CD8-positive, alpha-beta T cell (primary cell): ENCODE measurements at regions of chr11 and their contacts with region 1.

Region 1: DNA sequence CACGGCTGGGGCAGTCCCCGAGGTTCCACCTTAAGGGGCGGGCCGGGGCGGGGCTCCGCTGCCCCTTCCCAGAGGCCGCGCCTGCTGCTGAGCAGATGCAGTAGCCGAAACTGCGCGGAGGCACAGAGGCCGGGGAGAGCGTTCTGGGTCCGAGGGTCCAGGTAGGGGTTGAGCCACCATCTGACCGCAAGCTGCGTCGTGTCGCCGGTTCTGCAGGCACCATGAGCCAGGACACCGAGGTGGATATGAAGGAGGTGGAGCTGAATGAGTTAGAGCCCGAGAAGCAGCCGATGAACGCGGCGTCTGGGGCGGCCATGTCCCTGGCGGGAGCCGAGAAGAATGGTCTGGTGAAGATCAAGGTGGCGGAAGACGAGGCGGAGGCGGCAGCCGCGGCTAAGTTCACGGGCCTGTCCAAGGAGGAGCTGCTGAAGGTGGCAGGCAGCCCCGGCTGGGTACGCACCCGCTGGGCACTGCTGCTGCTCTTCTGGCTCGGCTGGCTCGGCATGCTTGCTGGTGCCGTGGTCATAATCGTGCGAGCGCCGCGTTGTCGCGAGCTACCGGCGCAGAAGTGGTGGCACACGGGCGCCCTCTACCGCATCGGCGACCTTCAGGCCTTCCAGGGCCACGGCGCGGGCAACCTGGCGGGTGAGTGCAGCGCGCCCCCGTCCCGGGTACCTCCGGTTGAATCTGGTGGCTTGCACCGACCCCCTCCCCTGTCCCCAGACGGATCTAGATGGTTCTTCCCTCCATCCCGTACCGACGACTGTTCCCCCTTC is at the start of gene SLC3A2:
- DNase-seq: peak; percentile 76 to 94 (median 85)
- ATAC-seq: peak; percentile 74
- H3K4me3 ChIP-seq: peak within 1 kb of the TSS; percentile 66 to 97
- H3K4me3 Mint-ChIP-seq: peak within 1 kb of the TSS; percentile 100
- H3K27ac ChIP-seq: peak within 1 kb of the TSS; percentile 94 to 99
- H3K27ac Mint-ChIP-seq: peak within 1 kb of the TSS; percentile 100
- H3K4me1 ChIP-seq: peaks cover 36% of the 10 kb centered on the region
- H3K4me1 Mint-ChIP-seq: peaks cover 50% of the 10 kb centered on the region
- H3K27me3 ChIP-seq: no peaks in the 10 kb centered on the region
- H3K27me3 Mint-ChIP-seq: no peaks in the 10 kb centered on the region
- CTCF ChIP-seq: peak; percentile 84
- total RNA-seq, gene SLC3A2: 212 to 245 TPM

Region 2: GRCh38 chr11:61429691-61430582 is 1451.1 kb before region 1 on chr11 and contains the starts of genes CPSF7 and SDHAF2:
- CTCF ChIA-PET with region 1: no interaction called
- POLR2A ChIA-PET with region 1: no interaction called
- intact Hi-C with region 1: loop called in 1 of 2 experiments (anchors 10 kb)
- DNase-seq: peak; percentile 93 to 99 (median 98)
- ATAC-seq: peak; percentile 80
- H3K4me3 ChIP-seq: peak within 1 kb of the TSS; percentile 70 to 95
- H3K4me3 Mint-ChIP-seq: peak within 1 kb of the TSS; percentile 97
- H3K27ac ChIP-seq: peak within 1 kb of the TSS; percentile 98 to 100
- H3K27ac Mint-ChIP-seq: peak within 1 kb of the TSS; percentile 100
- H3K4me1 ChIP-seq: peaks cover 53% of the 10 kb centered on the region
- H3K4me1 Mint-ChIP-seq: peaks cover 72% of the 10 kb centered on the region
- H3K27me3 ChIP-seq: no peaks in the 10 kb centered on the region
- H3K27me3 Mint-ChIP-seq: no peaks in the 10 kb centered on the region
- CTCF ChIP-seq: no peak
- total RNA-seq, gene CPSF7: 106 to 111 TPM
- total RNA-seq, gene SDHAF2: 31.4 to 33.0 TPM

Region 3: DNA sequence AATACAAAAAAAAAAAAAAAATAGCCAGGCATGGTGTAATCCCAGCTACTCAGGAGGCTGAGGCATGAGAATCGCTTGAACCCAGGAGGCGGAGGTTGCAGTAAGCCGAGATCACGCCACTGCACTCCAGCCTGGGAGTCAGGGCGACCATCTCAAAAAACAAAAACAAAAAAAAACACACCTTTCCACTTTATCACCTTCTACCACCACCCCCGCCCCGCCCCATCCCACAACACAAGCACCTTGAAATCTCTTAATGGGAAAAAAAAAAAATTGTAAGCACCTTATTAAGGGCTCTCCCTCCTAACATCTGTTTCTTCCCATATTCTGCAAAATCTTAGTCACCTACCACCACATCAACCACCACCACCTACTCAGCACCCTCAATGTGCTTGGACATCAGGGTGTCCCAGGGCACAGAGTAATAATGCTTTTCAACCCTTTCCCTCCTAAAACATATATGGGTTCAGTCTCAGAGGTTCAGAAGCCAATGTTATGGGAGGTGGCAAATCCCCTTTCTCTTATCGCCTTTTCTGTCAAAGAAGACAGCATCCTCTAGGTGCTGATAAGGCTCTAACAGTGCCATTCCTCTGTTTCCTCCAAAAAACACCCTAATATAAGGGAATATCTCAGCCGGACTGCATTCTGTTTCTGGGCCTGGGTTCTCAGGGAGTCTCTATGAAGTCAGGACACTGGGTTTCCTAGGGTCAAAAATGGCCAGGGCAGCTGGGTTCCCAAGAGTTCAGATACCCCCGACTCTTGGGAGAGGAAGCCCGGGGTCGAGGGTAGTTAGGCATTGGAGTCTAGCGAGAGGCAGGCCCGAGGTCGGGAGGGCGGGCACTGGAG is 228.6 kb before region 1 on chr11:
- CTCF ChIA-PET with region 1: no interaction called
- POLR2A ChIA-PET with region 1: no interaction called
- intact Hi-C with region 1: no loop called
- DNase-seq: peak in 3 of 9 experiments; percentile 26 to 50 (median 46)
- ATAC-seq: peak; percentile 10
- H3K4me3 ChIP-seq: peak overlapping the region; percentile 84 to 90
- H3K4me3 Mint-ChIP-seq: peak overlapping the region; percentile 91
- H3K27ac ChIP-seq: peak overlapping the region; percentile 81 to 91
- H3K27ac Mint-ChIP-seq: peak overlapping the region; percentile 94
- H3K4me1 ChIP-seq: peaks cover 14% of the 10 kb centered on the region
- H3K4me1 Mint-ChIP-seq: peaks cover 18% of the 10 kb centered on the region
- H3K27me3 ChIP-seq: no peaks in the 10 kb centered on the region
- H3K27me3 Mint-ChIP-seq: no peaks in the 10 kb centered on the region
- CTCF ChIP-seq: no peak

Region 4: GRCh38 chr11:62665075-62665598 is 215.9 kb before region 1 on chr11 and contains the starts of genes C11orf98 and CSKMT:
- CTCF ChIA-PET with region 1: no interaction called
- POLR2A ChIA-PET with region 1: interaction called, 13 read pairs
- intact Hi-C with region 1: loop called in 1 of 2 experiments (anchors 2 kb)
- DNase-seq: peak; percentile 92 to 98 (median 95)
- ATAC-seq: peak; percentile 87
- H3K4me3 ChIP-seq: peak within 1 kb of the TSS; percentile 95 to 97
- H3K4me3 Mint-ChIP-seq: peak within 1 kb of the TSS; percentile 96
- H3K27ac ChIP-seq: peak within 1 kb of the TSS; percentile 81 to 92
- H3K27ac Mint-ChIP-seq: peak within 1 kb of the TSS; percentile 93
- H3K4me1 ChIP-seq: peaks cover 31% of the 10 kb centered on the region
- H3K4me1 Mint-ChIP-seq: peaks cover 45% of the 10 kb centered on the region
- H3K27me3 ChIP-seq: no peaks in the 10 kb centered on the region
- H3K27me3 Mint-ChIP-seq: no peaks in the 10 kb centered on the region
- CTCF ChIP-seq: no peak
- total RNA-seq, gene C11orf98: 22.5 to 25.7 TPM
- total RNA-seq, gene CSKMT: 25.4 to 25.7 TPM

Region 5: DNA sequence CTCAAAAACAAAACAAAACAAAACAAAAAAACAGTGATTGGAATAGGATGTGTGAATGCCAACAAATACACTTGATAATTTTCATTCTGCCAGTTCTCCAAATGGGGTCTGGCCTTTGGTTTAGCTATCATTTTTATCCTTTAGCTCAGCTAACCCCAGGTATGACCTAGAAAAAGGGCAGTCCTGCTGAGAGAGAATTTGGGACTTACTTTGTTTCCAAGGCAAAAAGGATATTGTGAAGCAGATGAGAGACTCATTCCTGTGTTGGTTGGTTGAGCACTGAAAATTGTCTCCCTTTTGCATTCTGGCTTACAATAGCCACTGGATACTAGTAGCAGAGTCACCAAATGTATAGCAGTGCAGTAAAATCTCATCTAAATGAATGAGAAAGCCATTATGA is 143.8 kb before region 1 on chr11:
- CTCF ChIA-PET with region 1: no interaction called
- POLR2A ChIA-PET with region 1: no interaction called
- intact Hi-C with region 1: no loop called
- DNase-seq: no peak
- ATAC-seq: no peak
- H3K4me3 ChIP-seq: no peak overlapping the region
- H3K4me3 Mint-ChIP-seq: no peak overlapping the region
- H3K27ac ChIP-seq: no peak overlapping the region
- H3K27ac Mint-ChIP-seq: no peak overlapping the region
- H3K4me1 ChIP-seq: no peaks in the 10 kb centered on the region
- H3K4me1 Mint-ChIP-seq: peaks cover 7% of the 10 kb centered on the region
- H3K27me3 ChIP-seq: no peaks in the 10 kb centered on the region
- H3K27me3 Mint-ChIP-seq: no peaks in the 10 kb centered on the region
- CTCF ChIP-seq: no peak

Region 6: DNA sequence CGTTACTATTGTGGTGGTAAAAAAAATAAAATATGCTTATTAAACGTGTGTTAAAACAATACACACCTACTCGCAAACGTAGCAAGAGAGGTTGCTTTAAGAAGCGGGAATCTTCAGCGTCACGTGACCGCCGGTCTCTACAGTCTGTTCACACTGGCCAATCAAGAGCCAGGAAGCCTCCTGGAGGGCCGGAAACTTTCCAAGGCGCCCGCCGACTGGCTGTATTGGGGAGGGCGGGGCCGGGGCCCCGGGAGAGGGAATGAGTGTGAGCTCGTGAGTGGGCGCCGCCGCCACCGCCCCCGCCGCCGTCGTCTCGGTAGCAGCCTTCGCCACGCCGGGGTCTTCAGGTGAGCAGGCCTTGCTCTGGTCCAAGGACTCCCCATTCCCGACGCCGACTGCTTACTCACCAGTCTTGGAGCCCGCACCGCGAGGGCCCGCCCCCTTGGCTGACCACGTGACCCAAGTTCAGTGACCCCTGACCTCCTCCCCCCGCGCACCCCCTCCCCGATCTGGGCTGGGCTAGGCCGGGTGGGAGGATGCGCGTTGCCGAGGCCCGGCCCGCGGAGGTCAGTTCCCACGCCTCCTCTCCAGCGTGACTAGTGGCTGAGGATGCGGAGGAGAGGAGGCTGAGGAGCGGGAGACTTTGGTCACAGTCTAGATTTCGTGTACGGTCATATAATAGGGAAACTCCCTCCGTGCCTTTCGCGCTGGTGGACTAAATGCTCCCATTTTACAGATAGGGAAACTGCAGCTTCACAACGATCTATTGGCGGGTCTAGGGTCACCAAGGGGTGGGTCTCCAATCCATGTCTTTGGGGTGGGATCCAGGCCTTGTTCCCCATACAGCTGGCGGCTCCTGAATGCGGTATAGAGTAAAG is 109.6 kb before region 1 on chr11 and contains the start of gene TAF6L:
- CTCF ChIA-PET with region 1: interaction called, 3 read pairs
- POLR2A ChIA-PET with region 1: interaction called, 9 read pairs
- intact Hi-C with region 1: loop called (anchors 1 kb)
- DNase-seq: peak; percentile 74 to 93 (median 87)
- ATAC-seq: peak; percentile 83
- H3K4me3 ChIP-seq: peak within 1 kb of the TSS; percentile 66 to 78
- H3K4me3 Mint-ChIP-seq: peak within 1 kb of the TSS; percentile 91
- H3K27ac ChIP-seq: peak within 1 kb of the TSS; percentile 64 to 83
- H3K27ac Mint-ChIP-seq: peak within 1 kb of the TSS; percentile 94
- H3K4me1 ChIP-seq: peaks cover 22% of the 10 kb centered on the region
- H3K4me1 Mint-ChIP-seq: peaks cover 27% of the 10 kb centered on the region
- H3K27me3 ChIP-seq: no peaks in the 10 kb centered on the region
- H3K27me3 Mint-ChIP-seq: no peaks in the 10 kb centered on the region
- CTCF ChIP-seq: no peak
- total RNA-seq, gene TAF6L: 10.3 to 13.2 TPM

Region 7: GRCh38 chr11:62831520-62832335 is 49.3 kb before region 1 on chr11 and contains the start of gene STX5:
- CTCF ChIA-PET with region 1: interaction called, 3 read pairs
- POLR2A ChIA-PET with region 1: interaction called, 11 read pairs
- intact Hi-C with region 1: loop called (anchors 1 kb)
- DNase-seq: peak; percentile 99 to 100 (median 100)
- ATAC-seq: peak; percentile 97
- H3K4me3 ChIP-seq: peak within 1 kb of the TSS; percentile 88 to 95
- H3K4me3 Mint-ChIP-seq: peak within 1 kb of the TSS; percentile 96
- H3K27ac ChIP-seq: peak within 1 kb of the TSS; percentile 94 to 95
- H3K27ac Mint-ChIP-seq: peak within 1 kb of the TSS; percentile 98
- H3K4me1 ChIP-seq: peaks cover 21% of the 10 kb centered on the region
- H3K4me1 Mint-ChIP-seq: peaks cover 42% of the 10 kb centered on the region
- H3K27me3 ChIP-seq: no peaks in the 10 kb centered on the region
- H3K27me3 Mint-ChIP-seq: no peaks in the 10 kb centered on the region
- CTCF ChIP-seq: no peak
- total RNA-seq, gene STX5: 113 TPM

Region 8: GRCh38 chr11:62905927-62906531 is 25.0 kb after region 1 on chr11:
- CTCF ChIA-PET with region 1: interaction called, 10 read pairs
- POLR2A ChIA-PET with region 1: no interaction called
- intact Hi-C with region 1: no loop called
- DNase-seq: peak; percentile 61 to 88 (median 81)
- ATAC-seq: peak; percentile 77
- H3K4me3 ChIP-seq: no peak overlapping the region
- H3K4me3 Mint-ChIP-seq: no peak overlapping the region
- H3K27ac ChIP-seq: no peak overlapping the region
- H3K27ac Mint-ChIP-seq: no peak overlapping the region
- H3K4me1 ChIP-seq: no peaks in the 10 kb centered on the region
- H3K4me1 Mint-ChIP-seq: peaks cover 1% of the 10 kb centered on the region
- H3K27me3 ChIP-seq: no peaks in the 10 kb centered on the region
- H3K27me3 Mint-ChIP-seq: peaks cover 7% of the 10 kb centered on the region
- CTCF ChIP-seq: peak; percentile 96

Region 9: DNA sequence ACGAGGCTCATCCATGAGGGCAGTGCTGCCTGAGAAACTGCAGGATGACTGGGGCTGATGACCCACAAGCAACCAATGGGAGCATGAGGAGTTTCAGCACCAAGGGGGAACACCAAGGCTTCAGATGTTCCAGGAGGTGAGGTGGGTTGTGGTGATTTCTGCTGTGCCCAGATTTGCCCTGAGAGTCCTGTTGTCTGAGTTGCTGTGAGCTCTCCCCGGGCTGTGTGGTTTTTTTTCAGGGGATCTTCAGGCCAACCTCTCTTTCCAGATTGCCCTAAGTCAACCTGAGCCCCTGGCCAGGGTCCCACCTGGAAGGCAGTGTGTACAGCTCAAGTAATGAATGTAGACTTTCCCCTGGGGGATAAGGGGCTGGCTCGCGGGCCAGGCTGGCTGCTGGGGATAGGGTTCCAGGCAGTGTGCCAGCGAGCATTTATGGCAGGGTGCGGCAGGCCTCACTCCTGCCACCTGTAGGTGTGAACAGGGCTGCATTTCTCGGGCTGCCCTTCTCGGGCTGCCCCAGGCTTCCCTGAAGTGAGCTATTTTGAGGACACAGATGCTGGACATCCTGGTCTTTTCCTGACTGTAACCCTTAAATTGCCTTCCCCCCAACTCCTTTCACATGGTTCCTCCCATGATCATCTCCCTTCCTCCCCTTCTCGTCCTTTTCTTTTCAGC is 94.0 kb after region 1 on chr11:
- CTCF ChIA-PET with region 1: no interaction called
- POLR2A ChIA-PET with region 1: no interaction called
- intact Hi-C with region 1: no loop called
- DNase-seq: peak in 3 of 9 experiments; percentile 8 to 31 (median 16)
- ATAC-seq: no peak
- H3K4me3 ChIP-seq: no peak overlapping the region
- H3K4me3 Mint-ChIP-seq: no peak overlapping the region
- H3K27ac ChIP-seq: no peak overlapping the region
- H3K27ac Mint-ChIP-seq: no peak overlapping the region
- H3K4me1 ChIP-seq: no peaks in the 10 kb centered on the region
- H3K4me1 Mint-ChIP-seq: no peaks in the 10 kb centered on the region
- H3K27me3 ChIP-seq: no peaks in the 10 kb centered on the region
- H3K27me3 Mint-ChIP-seq: peaks cover 31% of the 10 kb centered on the region
- CTCF ChIP-seq: no peak